ENCODE measurements at regions of chr2 and their contacts with region 1.

Region 1: GRCh38 chr2:47180531-47180930 is 25.4 kb upstream of the STPG4 start:
- DNase-seq: no peak
- ATAC-seq: no peak
- H3K4me3 ChIP-seq: no peak overlapping the region
- H3K27ac ChIP-seq: no peak overlapping the region
- H3K4me1 ChIP-seq: peaks cover 0 to 5% (median 0%) of the 10 kb centered on the region in 3 donors
- H3K27me3 ChIP-seq: no peaks in the 10 kb centered on the region
- CTCF ChIP-seq: no peak

Region 2: GRCh38 chr2:47218066-47218581 is 37.6 kb after region 1 on chr2:
- intact Hi-C with region 1: loop called in 1 of 3 experiments (anchors 5 kb)
- DNase-seq: no peak
- ATAC-seq: peak in 3 of 4 donors; percentile 23 to 43 (median 39)
- H3K4me3 ChIP-seq: no peak overlapping the region
- H3K27ac ChIP-seq: no peak overlapping the region
- H3K4me1 ChIP-seq: no peaks in the 10 kb centered on the region
- H3K27me3 ChIP-seq: no peaks in the 10 kb centered on the region
- CTCF ChIP-seq: no peak

Region 3: DNA sequence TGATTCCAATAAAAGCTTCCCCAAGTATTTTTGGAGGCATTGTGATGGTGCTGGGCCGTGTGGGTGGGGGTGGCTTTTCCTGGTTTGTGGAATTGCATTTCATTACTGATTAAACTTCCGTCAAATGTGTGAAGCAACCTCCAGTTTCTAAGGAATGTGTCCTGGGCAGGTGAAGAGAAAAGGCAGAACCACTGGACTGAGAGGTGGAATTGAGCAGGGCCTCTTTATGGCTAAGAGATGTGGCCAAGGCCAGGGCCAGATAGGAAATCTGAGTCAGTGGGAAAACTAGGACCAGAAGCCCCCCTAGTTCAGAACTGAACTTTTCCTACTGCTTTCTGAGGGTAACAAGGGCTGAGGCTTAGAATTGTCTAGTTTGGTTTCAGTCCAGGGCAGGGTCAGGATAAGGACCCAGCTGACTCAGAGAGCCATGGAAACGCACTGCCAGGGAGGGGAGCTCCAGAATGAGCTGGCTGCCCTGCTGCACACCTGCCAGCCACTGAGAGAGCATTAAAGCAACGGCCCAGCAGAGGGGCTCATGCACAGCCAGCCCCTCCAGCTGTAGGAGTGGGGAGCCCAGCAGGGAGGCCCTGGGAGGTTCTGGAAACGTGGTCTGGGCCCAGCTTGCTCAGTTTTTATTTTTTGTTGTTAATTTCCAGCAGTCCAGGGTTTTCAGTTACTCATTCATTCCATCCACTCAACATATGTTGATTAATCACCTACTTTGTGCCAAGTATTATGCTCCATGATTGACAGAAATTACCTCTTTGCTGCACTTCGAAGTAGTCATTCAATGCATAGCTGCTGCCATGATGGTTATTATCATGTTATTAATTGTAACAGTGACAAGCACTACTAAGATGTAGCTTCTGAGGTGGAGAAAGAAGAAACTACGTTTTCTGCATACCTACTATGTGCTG is 378.5 kb after region 1 on chr2:
- intact Hi-C with region 1: no loop called
- DNase-seq: no peak
- ATAC-seq: no peak
- H3K4me3 ChIP-seq: no peak overlapping the region
- H3K27ac ChIP-seq: no peak overlapping the region
- H3K4me1 ChIP-seq: no peaks in the 10 kb centered on the region
- H3K27me3 ChIP-seq: no peaks in the 10 kb centered on the region
- CTCF ChIP-seq: no peak

Measured in pancreas (tissue), 10 donors.